Activated T-helper 2 cell treated with anti-CD3 and anti-CD28 coated beads, Interferon-gamma antibody, Interleukin-2, Interleukin-4, amounts not matched to agents 10 μg/mL and 5 μg/mL and 100 μg/mL, durations not matched to agents 14 hours and 24 hours and 36 hours (primary cell): ENCODE measurements at regions of chr1 and their contacts with region 1.

Region 1: DNA sequence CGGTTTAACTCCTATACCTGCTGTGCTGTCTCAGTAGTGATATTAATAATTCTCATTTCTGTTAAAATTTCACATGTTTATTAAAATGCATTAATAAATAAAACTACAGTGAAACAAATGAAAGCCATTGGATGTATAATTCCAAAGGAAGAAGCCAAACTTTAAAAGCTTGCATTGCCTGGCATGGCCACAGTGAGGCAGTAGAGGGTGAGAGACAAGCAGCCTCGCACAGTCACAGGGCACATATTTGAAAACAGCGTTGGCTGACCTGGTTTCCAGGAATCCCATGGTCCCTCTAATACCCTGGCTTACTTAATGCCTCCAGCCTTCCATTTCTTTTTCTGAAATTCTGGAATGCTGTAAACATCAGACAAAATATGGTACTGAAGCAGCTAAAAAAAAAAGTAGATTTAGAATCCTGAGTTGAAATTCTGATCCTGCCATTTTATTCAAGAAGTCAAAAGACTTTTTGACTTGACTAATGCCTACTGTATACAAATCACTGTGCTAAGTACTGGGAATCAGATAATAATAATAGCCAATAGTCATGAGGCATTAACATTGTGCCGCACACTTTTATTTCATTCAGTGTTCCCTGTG is 6.7 kb upstream of the RNASEL start:
- DNase-seq: peak; percentile 35
- H3K4me3 Mint-ChIP-seq: no peak overlapping the region
- H3K27ac Mint-ChIP-seq: no peak overlapping the region
- H3K4me1 Mint-ChIP-seq: peaks cover 8% of the 10 kb centered on the region
- H3K27me3 Mint-ChIP-seq: peaks cover 9% of the 10 kb centered on the region

Region 2: DNA sequence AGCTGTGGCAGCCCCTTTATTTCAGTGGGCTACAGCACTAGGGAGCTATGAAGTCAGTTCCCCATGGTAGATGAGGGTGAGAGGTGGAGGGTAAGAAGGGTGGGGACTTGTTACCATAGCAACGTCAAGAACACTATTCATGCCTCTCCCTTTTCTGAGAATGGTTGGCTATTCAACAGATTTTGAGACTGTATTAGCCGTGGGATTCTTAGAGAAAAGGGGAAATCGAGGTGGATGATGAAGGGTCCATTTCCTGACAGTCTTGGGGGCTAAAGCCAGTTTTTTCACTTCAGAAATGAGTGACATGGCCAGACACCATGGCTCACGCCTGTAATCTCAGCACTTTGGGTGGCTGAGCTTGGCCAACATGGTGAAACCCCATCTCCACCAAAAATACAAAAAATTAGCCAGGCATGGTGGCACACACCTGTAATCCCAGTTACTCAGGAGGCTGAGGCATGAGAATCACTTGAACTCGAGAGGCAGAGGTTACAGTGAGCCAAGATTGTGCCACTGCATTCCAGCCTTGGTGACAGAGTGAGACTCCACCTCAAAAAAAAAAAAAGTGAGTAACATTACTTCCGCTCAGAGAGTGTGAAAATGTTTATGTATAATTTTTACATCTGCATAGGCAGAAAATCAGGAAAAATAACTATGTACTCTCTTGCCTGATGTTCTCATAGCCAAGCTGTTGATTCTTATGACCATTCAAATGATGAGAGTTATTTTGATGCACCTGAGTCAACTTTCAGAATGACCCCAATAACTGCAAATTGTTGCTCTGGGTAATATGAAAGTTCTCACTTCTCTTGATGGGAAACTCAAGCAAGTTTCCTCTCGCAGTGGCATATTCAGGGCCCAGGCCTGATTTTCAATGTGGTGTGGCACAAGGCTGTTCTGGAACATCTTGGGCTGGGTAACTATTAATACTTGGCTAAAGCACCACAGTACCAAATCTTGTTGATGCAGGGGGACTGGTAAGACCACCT is 169.0 kb before region 1 on chr1:
- intact Hi-C with region 1: no loop called
- DNase-seq: no peak
- H3K4me3 Mint-ChIP-seq: no peak overlapping the region
- H3K27ac Mint-ChIP-seq: no peak overlapping the region
- H3K4me1 Mint-ChIP-seq: peaks cover 20% of the 10 kb centered on the region
- H3K27me3 Mint-ChIP-seq: peaks cover 36% of the 10 kb centered on the region

Region 3: GRCh38 chr1:182446033-182446669 is 149.6 kb before region 1 on chr1:
- intact Hi-C with region 1: loop called (anchors 5 kb)
- DNase-seq: no peak
- H3K4me3 Mint-ChIP-seq: no peak overlapping the region
- H3K27ac Mint-ChIP-seq: no peak overlapping the region
- H3K4me1 Mint-ChIP-seq: peaks cover 3% of the 10 kb centered on the region
- H3K27me3 Mint-ChIP-seq: peaks cover 6% of the 10 kb centered on the region

Region 4: DNA sequence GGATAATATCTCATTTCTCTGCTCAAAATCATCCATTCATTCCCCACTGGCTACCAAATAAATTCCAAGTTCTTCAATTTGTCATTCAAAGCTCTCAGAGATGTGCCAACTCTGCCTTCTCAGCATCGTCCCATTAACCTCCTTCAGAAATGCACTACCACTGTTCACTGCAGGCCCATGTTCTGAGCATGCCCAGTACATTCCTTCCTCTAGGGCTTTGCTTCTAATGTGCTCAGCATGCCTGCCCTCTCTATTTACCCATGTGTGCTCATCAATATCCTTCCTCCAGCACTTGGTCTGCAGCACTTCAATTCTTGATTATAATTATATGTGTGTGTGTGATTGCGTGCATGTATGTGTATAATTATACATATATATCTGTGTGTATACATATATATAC is 124.7 kb after region 1 on chr1:
- intact Hi-C with region 1: no loop called
- DNase-seq: no peak
- H3K4me3 Mint-ChIP-seq: no peak overlapping the region
- H3K27ac Mint-ChIP-seq: no peak overlapping the region
- H3K4me1 Mint-ChIP-seq: peaks cover 32% of the 10 kb centered on the region
- H3K27me3 Mint-ChIP-seq: peaks cover 3% of the 10 kb centered on the region

Region 5: DNA sequence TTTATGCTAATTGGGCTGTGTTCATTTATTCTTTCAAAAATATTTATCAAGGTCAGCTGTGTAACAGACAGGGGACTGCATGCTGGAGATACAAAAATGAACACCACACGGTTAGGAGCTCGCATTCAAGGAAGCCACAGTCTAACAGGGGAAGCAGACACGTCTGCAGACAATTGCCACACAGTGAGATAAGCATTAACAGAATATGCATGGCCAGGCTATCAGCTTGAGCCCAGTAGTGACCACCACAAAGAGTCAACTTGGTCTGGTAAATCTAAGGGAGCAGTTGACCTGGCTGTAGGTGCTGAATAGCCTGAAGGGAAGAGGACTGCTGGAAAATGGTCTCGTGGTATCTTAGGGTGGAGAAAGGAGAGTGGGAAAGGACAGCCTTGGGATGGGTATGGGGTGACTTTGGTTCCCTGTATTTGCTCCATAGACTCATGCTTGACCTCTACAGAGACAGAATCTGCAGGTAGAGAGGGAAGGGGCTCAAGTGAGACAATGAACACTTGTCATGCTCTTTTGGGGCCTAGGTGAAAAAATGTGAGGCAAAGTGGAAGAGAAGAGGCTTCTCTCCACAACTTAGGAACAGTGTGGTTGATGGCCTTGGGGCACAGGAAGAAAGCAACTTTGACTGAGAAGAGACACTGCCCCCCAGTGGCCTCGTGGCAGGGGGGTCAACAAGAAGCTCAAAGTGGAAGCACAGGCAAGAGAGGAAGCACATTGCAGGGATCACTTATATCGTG is 186.3 kb after region 1 on chr1:
- intact Hi-C with region 1: loop called (anchors 1 kb)
- DNase-seq: peak; percentile 55
- H3K4me3 Mint-ChIP-seq: no peak overlapping the region
- H3K27ac Mint-ChIP-seq: no peak overlapping the region
- H3K4me1 Mint-ChIP-seq: peaks cover 13% of the 10 kb centered on the region
- H3K27me3 Mint-ChIP-seq: peaks cover 8% of the 10 kb centered on the region